ENCODE measurements at regions of chr16 and their contacts with region 1.

Region 1: GRCh38 chr16:2160915-2161551 is 5.5 kb downstream of the TRAF7 start:
- DNase-seq: no peak

Region 2: DNA sequence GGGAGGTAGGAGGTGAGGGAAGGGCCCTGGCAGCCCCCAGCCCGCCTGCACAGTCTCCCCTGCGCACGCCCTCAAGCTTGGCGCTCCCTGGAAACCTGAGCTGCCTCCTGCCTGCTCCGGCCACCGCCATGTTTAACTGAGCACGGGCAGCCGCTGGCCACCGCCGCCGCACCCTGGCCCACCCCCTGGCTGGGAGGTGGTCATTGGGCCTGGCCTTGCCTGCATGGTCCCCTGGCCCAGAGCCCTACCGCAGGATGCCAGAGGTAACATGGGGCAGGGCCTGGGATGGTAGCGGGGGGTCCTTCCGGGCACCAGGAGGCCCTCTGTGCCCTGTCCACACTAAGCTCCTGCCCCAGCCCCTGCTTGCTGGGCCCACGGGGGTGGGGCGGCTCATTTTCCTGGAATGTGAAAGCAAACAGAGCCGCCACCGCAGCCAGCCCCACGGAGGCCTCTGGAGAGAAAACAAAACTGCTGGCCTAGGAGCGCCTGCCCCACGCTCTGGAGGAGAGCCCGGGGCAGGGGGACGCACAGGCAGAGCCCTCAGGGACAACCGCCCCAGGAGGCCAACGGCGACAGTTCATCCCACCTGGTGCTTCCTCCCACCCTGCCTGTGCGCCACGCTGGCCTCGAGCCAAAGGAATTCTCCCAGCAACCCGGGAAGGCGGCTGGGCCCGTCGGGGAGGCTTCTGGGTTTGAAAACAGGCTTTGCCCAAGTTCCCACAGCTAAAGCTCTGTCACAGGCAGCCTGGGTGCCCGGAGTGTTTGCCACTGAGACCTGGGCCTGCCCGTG is 125.4 kb before region 1 on chr16:
- in situ Hi-C with region 1: loop called (anchors 5 kb)
- DNase-seq: no peak

Region 3: DNA sequence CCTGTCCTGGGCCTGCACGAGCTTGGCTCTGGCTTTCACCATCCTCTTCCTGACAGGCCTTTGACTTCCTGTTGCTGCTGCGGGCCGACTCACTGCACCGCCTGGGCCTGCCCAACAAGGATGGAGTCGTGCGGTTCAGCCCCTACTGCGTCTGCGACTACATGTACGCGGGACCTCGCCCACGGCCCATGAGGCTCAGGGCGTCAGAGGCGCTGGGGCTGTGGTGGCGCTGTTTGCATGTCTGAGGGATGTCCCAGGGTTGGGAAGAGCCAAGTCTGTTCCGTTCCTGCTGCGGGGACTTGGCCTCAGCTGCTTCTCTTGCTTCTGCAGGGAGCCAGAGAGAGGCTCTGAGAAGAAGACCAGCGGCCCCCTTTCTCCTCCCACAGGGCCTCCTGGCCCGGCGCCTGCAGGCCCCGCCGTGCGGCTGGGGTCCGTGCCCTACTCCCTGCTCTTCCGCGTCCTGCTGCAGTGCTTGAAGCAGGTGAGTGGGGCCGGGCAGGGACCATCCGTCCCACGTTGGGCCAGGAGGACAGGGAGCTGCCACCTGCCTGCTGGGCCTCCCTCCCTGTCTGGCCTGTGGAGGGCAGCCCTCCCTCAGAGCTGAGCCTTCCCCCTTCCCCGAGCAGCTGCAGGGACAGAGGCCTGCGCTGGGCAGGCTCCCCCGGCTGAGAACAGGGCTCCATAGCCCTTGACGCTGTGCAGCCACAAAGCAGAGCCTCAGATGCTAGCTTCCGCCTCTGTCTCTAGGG is 89.4 kb before region 1 on chr16:
- in situ Hi-C with region 1: loop called (anchors 10 kb)
- DNase-seq: peak; percentile 38

Region 4: DNA sequence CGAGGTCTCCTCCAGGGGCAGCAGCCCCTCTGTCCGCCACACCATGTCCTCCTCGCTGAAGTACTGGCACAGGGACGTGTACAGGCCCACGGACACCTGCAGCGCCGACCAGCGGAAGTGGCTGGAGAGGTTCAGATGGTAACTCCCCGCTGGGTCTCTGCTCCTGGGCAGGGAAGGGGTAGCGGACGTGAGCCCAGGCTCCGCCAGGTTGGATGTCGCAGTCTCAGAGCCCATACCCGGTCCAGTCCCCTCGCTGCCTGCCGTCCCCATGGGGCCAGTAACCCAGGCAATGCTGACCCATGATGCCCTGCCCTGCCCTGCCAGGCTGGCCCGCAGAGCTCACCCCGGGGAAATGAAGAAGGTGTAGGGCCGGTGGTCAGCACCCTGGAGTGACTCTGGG is 58.6 kb before region 1 on chr16:
- in situ Hi-C with region 1: no loop called
- DNase-seq: peak; percentile 33